ENCODE measurements at regions of chr16 and their contacts with region 1.

Region 1: DNA sequence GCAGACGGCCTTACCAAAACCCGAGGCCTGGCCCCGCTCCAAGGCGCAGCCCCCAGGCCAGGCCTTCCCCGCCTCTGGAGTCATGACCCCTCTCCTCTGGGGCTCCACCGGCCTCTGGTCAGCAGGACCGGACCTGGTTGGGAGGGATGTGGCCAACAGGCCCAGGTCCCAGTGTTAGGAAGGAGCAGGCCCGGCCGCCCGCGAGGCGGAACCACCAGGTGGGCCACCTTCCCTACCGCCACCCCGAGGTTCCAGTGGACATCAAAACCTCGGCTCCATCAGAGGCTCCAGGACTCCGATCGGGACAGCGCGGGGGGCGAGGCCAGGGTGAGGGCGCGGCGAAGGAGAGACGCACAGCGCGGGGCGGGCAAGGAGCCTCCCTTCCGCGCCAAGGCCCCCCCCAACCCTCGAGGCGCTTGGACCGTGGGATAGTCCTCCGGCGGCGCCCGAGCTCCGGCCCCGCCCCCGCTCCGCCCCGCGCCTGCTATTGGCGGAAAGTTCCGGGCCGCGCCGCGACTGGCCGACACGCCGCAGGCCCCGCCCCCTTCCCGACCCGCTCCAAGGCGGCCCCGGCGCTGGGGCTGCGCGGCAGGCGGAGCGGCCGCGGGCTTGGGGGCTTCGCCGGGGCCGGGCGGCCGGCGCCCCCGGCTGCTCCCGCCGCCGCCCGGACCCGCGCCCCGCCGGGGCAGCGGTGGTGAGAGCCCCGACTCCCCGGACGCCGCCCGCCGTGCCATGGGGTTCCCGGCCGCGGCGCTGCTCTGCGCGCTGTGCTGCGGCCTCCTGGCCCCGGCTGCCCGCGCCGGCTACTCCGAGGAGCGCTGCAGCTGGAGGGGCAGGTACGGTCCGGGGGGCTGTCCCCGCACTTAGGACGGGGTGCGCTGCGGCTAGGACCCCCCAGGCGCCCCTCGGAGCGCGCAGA is at the start of gene METRN:
- DNase-seq: peak; percentile 76 to 95 (median 88)
- ATAC-seq: peak; percentile 92
- H3K4me3 ChIP-seq: peak within 1 kb of the TSS; percentile 12
- H3K4me3 Mint-ChIP-seq: peak within 1 kb of the TSS; percentile 69
- H3K27ac ChIP-seq: no peak within 1 kb of the TSS
- H3K27ac Mint-ChIP-seq: no peak within 1 kb of the TSS
- H3K4me1 ChIP-seq: peaks cover 33% of the 10 kb centered on the region
- H3K4me1 Mint-ChIP-seq: peaks cover 18% of the 10 kb centered on the region
- H3K27me3 ChIP-seq: peaks cover 25 to 30% of the 10 kb centered on the region in 2 experiments
- H3K27me3 Mint-ChIP-seq: peaks cover 21% of the 10 kb centered on the region
- CTCF ChIP-seq: no peak
- total RNA-seq, gene METRN: 2.6 to 3.2 TPM

Region 2: GRCh38 chr16:728131-728889 is 13.5 kb after region 1 on chr16:
- CTCF ChIA-PET with region 1: interaction called, 5 read pairs
- POLR2A ChIA-PET with region 1: interaction called, 30 read pairs
- intact Hi-C with region 1: loop called in 1 of 2 experiments (anchors 2 kb)
- DNase-seq: peak in 12 of 14 experiments; percentile 42 to 92 (median 56)
- ATAC-seq: peak; percentile 74
- H3K4me3 ChIP-seq: peak overlapping the region; percentile 41
- H3K4me3 Mint-ChIP-seq: peak overlapping the region; percentile 38
- H3K27ac ChIP-seq: no peak overlapping the region
- H3K27ac Mint-ChIP-seq: no peak overlapping the region
- H3K4me1 ChIP-seq: peaks cover 26% of the 10 kb centered on the region
- H3K4me1 Mint-ChIP-seq: no peaks in the 10 kb centered on the region
- H3K27me3 ChIP-seq: no peaks in the 10 kb centered on the region
- H3K27me3 Mint-ChIP-seq: no peaks in the 10 kb centered on the region
- CTCF ChIP-seq: no peak

Region 3: GRCh38 chr16:740764-741505 is 26.1 kb after region 1 on chr16 and contains the start of gene CIAO3:
- CTCF ChIA-PET with region 1: interaction called, 9 read pairs
- POLR2A ChIA-PET with region 1: interaction called, 4 read pairs
- intact Hi-C with region 1: loop called (anchors 1 kb)
- DNase-seq: peak; percentile 83 to 96 (median 91)
- ATAC-seq: peak; percentile 94
- H3K4me3 ChIP-seq: peak within 1 kb of the TSS; percentile 88
- H3K4me3 Mint-ChIP-seq: peak within 1 kb of the TSS; percentile 83
- H3K27ac ChIP-seq: peak within 1 kb of the TSS; percentile 64 to 73
- H3K27ac Mint-ChIP-seq: peak within 1 kb of the TSS; percentile 62
- H3K4me1 ChIP-seq: peaks cover 20% of the 10 kb centered on the region
- H3K4me1 Mint-ChIP-seq: no peaks in the 10 kb centered on the region
- H3K27me3 ChIP-seq: no peaks in the 10 kb centered on the region
- H3K27me3 Mint-ChIP-seq: no peaks in the 10 kb centered on the region
- CTCF ChIP-seq: peak; percentile 97
- total RNA-seq, gene CIAO3: 33.3 to 38.2 TPM

Region 4: DNA sequence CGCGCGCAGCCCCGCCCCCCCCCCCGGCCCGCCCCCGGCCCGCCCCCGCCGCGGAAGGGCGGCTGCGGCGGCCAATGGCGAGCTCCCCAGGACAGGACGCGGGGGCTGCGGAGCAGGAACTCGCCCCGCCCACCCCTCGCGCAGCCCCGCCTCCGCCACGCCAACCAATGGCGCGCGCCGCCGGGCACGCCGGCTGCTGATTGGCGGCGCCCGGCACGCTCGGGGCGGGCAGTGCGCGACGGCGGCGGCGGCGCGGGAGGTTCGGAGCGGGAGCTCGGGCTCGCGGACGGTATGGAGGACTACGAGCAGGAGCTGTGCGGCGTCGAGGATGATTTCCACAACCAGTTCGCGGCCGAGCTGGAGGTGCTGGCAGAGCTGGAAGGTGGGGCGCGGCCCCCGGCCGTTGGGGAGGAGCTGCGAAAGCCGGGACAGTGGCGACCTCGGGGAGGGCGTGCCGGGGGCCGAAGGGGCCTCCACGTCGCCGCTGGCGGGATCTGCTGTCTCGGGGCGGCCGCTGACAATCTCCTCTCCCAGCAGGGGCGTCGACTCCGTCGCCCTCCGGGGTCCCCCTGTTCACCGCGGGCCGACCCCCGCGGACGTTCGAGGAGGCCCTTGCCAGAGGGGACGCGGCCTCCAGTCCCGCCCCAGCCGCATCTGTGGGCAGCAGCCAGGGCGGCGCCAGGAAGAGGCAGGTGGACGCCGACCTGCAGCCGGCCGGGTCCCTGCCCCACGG is 73.7 kb after region 1 on chr16 and contains the start of gene CHTF18:
- CTCF ChIA-PET with region 1: interaction called, 9 read pairs
- POLR2A ChIA-PET with region 1: interaction called, 5 read pairs
- intact Hi-C with region 1: loop called in 1 of 2 experiments (anchors 1 kb)
- DNase-seq: peak; percentile 87 to 98 (median 94)
- ATAC-seq: peak; percentile 96
- H3K4me3 ChIP-seq: peak within 1 kb of the TSS; percentile 87
- H3K4me3 Mint-ChIP-seq: peak within 1 kb of the TSS; percentile 89
- H3K27ac ChIP-seq: peak within 1 kb of the TSS in 1 of 2 donors; percentile 35
- H3K27ac Mint-ChIP-seq: peak within 1 kb of the TSS; percentile 9
- H3K4me1 ChIP-seq: peaks cover 34% of the 10 kb centered on the region
- H3K4me1 Mint-ChIP-seq: no peaks in the 10 kb centered on the region
- H3K27me3 ChIP-seq: no peaks in the 10 kb centered on the region
- H3K27me3 Mint-ChIP-seq: no peaks in the 10 kb centered on the region
- CTCF ChIP-seq: no peak
- total RNA-seq, gene CHTF18: 30.7 to 31.1 TPM

Region 5: DNA sequence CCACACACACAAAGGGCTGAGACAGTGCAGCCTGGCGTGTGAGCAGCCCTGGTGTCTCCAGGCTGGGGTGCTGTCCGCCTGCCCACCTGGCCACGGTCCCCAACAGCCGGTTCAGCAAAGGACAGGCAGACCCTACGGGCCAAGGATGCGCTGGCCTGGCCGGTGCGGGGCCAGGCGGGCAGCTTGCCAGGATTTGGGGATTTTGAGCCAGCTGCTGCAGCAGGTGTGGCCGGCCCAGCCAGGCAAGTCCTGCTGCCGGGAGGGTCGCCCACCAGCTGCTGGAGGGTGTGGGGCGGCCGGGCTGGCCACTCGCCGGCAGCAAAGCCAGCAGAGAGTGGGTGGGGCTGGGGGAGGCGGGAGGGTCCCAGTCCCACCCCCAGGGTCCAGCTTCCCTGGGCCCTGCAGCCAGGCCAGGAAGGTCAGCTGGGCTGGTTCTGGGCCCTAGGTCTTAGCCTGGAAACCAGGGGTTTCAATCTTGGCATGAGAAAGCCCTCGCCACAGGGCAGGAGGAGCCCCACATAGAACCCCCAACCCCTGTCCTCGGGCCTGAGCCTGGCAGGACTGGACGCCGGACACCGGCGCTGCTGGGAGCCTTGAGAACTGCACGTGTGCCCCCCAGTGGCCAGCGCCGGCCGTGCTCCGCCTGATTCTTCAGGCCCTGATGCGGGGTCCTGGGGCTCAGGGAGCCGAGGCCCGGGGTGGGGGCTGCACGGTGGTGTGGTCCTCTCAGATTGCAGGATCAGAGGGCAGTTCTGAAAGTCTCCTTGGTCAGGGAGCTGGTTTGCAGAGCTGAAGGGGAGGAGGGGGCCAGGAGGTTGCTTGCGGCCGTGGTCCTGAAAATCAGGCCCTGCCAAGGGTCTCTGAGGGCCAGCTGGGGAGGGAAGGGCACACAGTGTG is 340.1 kb after region 1 on chr16:
- CTCF ChIA-PET with region 1: no interaction called
- POLR2A ChIA-PET with region 1: no interaction called
- intact Hi-C with region 1: loop called in 1 of 2 experiments (anchors 5 kb)
- DNase-seq: peak in 11 of 14 experiments; percentile 12 to 63 (median 28)
- ATAC-seq: no peak
- H3K4me3 ChIP-seq: no peak overlapping the region
- H3K4me3 Mint-ChIP-seq: no peak overlapping the region
- H3K27ac ChIP-seq: no peak overlapping the region
- H3K27ac Mint-ChIP-seq: no peak overlapping the region
- H3K4me1 ChIP-seq: peaks cover 11% of the 10 kb centered on the region
- H3K4me1 Mint-ChIP-seq: no peaks in the 10 kb centered on the region
- H3K27me3 ChIP-seq: peaks cover 0 to 8% of the 10 kb centered on the region in 2 experiments
- H3K27me3 Mint-ChIP-seq: peaks cover 4% of the 10 kb centered on the region
- CTCF ChIP-seq: peak; percentile 66

Region 6: DNA sequence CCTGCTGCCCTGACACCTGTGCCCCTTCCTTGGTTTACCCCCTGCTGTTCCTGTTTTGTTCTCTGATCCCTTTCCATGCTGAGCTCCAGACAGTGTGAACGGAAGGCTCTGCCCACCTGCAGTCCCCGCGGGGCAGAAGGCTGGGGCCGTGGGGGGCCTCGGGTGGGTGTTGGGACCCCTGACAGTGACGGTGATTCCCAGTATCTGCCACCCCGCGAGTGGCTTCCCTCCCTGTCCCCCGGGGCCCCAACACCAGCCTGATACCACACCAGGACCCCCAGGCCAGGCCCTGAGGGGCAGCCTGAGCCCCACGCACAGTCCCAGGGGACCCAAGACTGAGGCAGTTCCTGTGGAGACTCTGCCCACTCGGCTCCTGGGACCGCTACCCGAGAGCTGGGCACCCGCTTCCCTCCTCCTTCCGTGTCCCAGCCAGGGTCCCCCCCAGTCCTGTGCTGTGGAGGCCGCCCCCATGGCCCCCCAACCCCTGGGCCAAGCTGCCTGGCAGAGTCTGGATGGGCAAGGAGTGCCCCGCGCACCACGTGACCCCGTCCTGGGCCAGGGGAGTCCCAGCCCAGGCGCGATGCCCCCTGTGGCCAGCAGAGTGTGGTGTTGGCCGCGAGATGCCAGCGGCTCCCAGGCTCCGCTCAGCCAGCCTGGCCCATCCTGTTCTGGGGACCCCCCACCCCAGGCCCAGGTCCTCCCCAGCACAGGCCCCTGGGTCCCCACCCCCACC is 391.2 kb after region 1 on chr16:
- CTCF ChIA-PET with region 1: no interaction called
- POLR2A ChIA-PET with region 1: no interaction called
- intact Hi-C with region 1: loop called in 1 of 2 experiments (anchors 2 kb)
- DNase-seq: peak in 13 of 14 experiments; percentile 11 to 69 (median 33)
- ATAC-seq: peak; percentile 67
- H3K4me3 ChIP-seq: no peak overlapping the region
- H3K4me3 Mint-ChIP-seq: no peak overlapping the region
- H3K27ac ChIP-seq: no peak overlapping the region
- H3K27ac Mint-ChIP-seq: no peak overlapping the region
- H3K4me1 ChIP-seq: peaks cover 9% of the 10 kb centered on the region
- H3K4me1 Mint-ChIP-seq: no peaks in the 10 kb centered on the region
- H3K27me3 ChIP-seq: peaks cover 23 to 36% of the 10 kb centered on the region in 2 experiments
- H3K27me3 Mint-ChIP-seq: peaks cover 14% of the 10 kb centered on the region
- CTCF ChIP-seq: peak; percentile 39

Region 7: DNA sequence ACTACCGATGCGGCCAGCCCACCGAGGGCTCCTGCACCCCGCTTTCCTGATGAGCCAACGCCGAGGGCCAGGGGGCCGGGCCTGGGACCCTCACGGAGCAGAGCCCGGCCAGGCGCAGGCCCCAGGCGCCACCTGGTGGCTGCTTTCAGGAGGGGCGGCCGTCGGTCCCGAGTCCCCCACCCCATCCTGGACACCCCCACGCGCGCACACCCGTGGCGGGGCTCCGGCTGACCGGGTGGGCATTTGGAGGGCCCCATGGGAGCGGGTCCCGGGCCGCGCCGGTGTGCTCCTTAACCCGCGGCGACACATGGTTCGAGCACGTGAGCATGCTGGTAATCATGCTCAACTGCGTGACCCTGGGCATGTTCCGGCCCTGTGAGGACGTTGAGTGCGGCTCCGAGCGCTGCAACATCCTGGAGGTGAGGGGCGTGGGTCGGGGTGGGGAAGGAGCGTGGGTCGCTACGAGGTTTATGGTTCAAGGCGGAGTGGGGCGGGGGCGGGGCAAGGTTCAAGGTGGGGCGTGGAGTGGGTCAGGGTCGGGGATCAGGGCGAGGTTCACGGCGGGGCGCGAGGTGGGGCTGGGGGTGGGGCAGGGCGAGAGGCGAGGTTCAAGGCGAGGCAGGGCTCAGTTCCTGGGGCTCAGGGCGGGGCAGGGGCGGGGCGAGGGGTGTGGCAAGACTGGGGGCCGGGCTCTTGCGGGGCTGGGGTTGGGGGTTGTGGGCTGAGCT is 480.0 kb after region 1 on chr16:
- CTCF ChIA-PET with region 1: no interaction called
- POLR2A ChIA-PET with region 1: no interaction called
- intact Hi-C with region 1: loop called in 1 of 2 experiments (anchors 5 kb)
- DNase-seq: peak in 6 of 14 experiments; percentile 13 to 51 (median 40)
- ATAC-seq: no peak
- H3K4me3 ChIP-seq: no peak overlapping the region
- H3K4me3 Mint-ChIP-seq: no peak overlapping the region
- H3K27ac ChIP-seq: no peak overlapping the region
- H3K27ac Mint-ChIP-seq: no peak overlapping the region
- H3K4me1 ChIP-seq: peaks cover 5% of the 10 kb centered on the region
- H3K4me1 Mint-ChIP-seq: no peaks in the 10 kb centered on the region
- H3K27me3 ChIP-seq: peaks cover 0 to 3% of the 10 kb centered on the region in 2 experiments
- H3K27me3 Mint-ChIP-seq: no peaks in the 10 kb centered on the region
- CTCF ChIP-seq: peak; percentile 70